ENCODE measurements at regions of chr14 and their contacts with region 1.

Region 1: DNA sequence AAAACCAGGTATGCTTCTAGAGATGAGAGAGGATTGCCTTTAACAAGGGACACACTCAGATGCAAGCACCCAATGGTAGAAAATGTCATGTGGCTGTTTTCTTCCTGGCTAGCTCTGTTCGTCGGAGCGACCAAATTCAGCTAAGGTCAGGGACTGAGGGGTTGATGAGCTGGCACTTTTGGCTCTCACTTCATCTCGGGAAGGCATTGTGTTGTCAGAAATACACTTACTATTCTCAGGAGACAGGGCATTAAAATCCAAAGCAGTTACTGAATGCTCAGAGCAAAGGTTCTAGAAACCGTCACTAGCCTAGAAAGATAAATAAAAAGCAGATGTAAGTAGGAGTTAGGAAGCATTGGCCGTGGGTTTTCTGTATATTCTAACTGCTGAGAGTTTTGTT is 275.7 kb upstream of the SSTR1 start:
- DNase-seq: no peak
- ATAC-seq: no peak
- H3K4me3 ChIP-seq: no peak overlapping the region
- H3K4me1 ChIP-seq: no peaks in the 10 kb centered on the region
- CTCF ChIP-seq: no peak

Region 2: DNA sequence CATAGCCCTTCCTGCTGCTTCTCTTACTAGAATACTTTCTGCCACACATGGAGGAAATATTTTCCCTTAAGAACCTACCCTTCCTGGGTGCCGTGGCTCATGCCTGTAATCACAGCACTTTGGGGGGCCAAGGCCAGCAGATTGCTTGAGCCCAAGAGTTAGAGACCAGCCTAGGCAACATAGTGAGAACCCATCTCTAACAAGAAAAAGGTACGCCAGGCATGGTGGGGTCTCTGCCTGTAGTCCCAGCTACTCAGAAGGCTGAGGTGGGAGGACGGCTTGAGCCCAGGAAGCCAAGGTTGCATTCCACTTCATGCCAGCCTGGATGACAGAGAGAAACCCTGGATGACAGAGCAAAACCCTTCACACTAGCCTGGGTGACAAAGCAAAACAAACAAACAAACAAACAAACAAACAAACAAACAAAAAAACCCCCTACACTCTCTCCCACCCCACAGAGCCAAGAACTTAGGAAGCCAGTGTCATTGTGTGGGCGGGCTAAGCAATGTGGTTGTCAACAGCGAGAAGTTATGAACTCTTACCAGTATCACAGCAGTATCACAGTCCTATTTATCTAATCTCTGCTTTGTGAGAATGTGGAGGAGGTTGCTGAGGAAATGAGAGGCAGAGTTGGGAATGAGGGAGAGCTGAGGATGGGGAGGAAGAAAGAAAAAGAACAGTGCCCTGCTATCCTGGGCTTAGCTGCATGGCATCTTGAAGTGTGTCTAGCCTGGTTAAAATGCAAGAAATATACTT is 377.7 kb after region 1 on chr14:
- intact Hi-C with region 1: loop called in 1 of 2 experiments (anchors 10 kb)
- DNase-seq: peak in 1 of 3 donors; percentile 17
- ATAC-seq: no peak
- H3K4me3 ChIP-seq: no peak overlapping the region
- H3K4me1 ChIP-seq: no peaks in the 10 kb centered on the region
- CTCF ChIP-seq: no peak